Mammary epithelial cell (primary cell): ENCODE measurements at regions of chr9 and their contacts with region 1.

Region 1: GRCh38 chr9:130138171-130138653 is 34.0 kb upstream of the NCS1 start:
- DNase-seq: peak; percentile 97
- H3K4me3 ChIP-seq: no peak overlapping the region
- H3K27ac ChIP-seq: peak overlapping the region; percentile 51
- H3K4me1 ChIP-seq: peaks cover 32% of the 10 kb centered on the region
- H3K27me3 ChIP-seq: no peaks in the 10 kb centered on the region
- CTCF ChIP-seq: no peak

Region 2: DNA sequence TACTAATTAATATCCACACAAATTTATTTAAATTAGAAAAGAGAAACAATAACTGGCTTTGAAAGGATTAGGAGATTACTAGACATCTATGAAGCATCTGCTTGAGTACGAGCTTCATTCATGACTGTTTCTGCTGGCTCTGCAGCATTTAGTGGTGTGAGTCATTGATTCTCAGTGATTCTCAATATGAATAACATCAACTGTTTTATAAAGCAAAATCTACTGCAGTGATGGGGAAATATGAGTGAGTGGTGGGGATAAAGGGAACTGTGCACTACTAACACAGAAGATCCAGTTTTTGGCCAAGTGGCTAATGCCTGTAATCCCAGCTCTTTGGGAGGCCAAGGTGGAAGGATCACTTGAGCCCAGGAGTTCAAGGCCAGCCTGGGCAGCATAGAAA is 103.6 kb before region 1 on chr9:
- CTCF ChIA-PET with region 1: no interaction called
- dilution Hi-C with region 1: no loop called
- in situ Hi-C with region 1: no loop called
- intact Hi-C with region 1: no loop called
- DNase-seq: peak; percentile 67
- H3K4me3 ChIP-seq: no peak overlapping the region
- H3K27ac ChIP-seq: no peak overlapping the region
- H3K4me1 ChIP-seq: peaks cover 7% of the 10 kb centered on the region
- H3K27me3 ChIP-seq: no peaks in the 10 kb centered on the region
- CTCF ChIP-seq: no peak

Region 3: DNA sequence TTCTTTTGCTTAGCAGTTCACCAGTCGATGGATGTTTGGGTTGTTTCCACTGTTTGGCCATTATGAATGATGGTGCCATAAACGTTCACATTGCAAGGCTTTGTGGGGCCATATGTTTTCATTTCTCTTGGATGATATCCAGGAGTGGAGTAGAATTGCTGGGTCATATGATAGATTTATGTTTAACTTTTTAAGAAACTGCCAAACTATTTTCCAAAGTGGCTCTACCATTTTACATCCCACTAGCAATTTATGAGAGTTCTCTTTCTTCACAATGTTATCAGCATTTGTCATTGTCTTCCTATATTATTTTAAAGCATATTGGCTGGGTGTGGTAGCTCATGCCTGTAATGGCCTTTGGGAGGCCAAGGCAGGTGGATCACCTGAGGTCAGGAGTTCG is 79.3 kb before region 1 on chr9:
- CTCF ChIA-PET with region 1: no interaction called
- dilution Hi-C with region 1: no loop called
- in situ Hi-C with region 1: no loop called
- intact Hi-C with region 1: no loop called
- DNase-seq: no peak
- H3K4me3 ChIP-seq: no peak overlapping the region
- H3K27ac ChIP-seq: no peak overlapping the region
- H3K4me1 ChIP-seq: peaks cover 5% of the 10 kb centered on the region
- H3K27me3 ChIP-seq: no peaks in the 10 kb centered on the region
- CTCF ChIP-seq: no peak

Region 4: GRCh38 chr9:130150779-130151382 is 12.7 kb after region 1 on chr9:
- CTCF ChIA-PET with region 1: no interaction called
- dilution Hi-C with region 1: no loop called
- in situ Hi-C with region 1: no loop called
- intact Hi-C with region 1: loop called (anchors 1 kb)
- DNase-seq: peak; percentile 55
- H3K4me3 ChIP-seq: no peak overlapping the region
- H3K27ac ChIP-seq: peak overlapping the region; percentile 20
- H3K4me1 ChIP-seq: peaks cover 8% of the 10 kb centered on the region
- H3K27me3 ChIP-seq: no peaks in the 10 kb centered on the region
- CTCF ChIP-seq: no peak

Region 5: GRCh38 chr9:130199605-130200004 is 61.4 kb after region 1 on chr9:
- CTCF ChIA-PET with region 1: no interaction called
- dilution Hi-C with region 1: no loop called
- in situ Hi-C with region 1: no loop called
- intact Hi-C with region 1: loop called (anchors 1 kb)
- DNase-seq: peak; percentile 78
- H3K4me3 ChIP-seq: no peak overlapping the region
- H3K27ac ChIP-seq: no peak overlapping the region
- H3K4me1 ChIP-seq: peaks cover 53% of the 10 kb centered on the region
- H3K27me3 ChIP-seq: no peaks in the 10 kb centered on the region
- CTCF ChIP-seq: no peak